ENCODE measurements at regions of chr20 and their contacts with region 1.

Region 1: GRCh38 chr20:63537525-63538203 is 488 bp upstream of the PTK6 start:
- DNase-seq: peak; percentile 93
- ATAC-seq: peak; percentile 86
- H3K4me3 Mint-ChIP-seq: peak overlapping the region; percentile 80
- H3K27ac Mint-ChIP-seq: peak overlapping the region; percentile 80
- H3K4me1 Mint-ChIP-seq: peaks cover 27% of the 10 kb centered on the region
- H3K27me3 Mint-ChIP-seq: no peaks in the 10 kb centered on the region
- CTCF ChIP-seq: peak; percentile 23

Region 2: GRCh38 chr20:63553227-63553932 is 15.7 kb after region 1 on chr20:
- CTCF ChIA-PET with region 1: interaction called, 17 read pairs
- POLR2A ChIA-PET with region 1: interaction called, 42 read pairs
- intact Hi-C with region 1: loop called (anchors 1 kb)
- DNase-seq: peak; percentile 86
- ATAC-seq: peak; percentile 78
- H3K4me3 Mint-ChIP-seq: peak overlapping the region; percentile 84
- H3K27ac Mint-ChIP-seq: peak overlapping the region; percentile 82
- H3K4me1 Mint-ChIP-seq: peaks cover 50% of the 10 kb centered on the region
- H3K27me3 Mint-ChIP-seq: no peaks in the 10 kb centered on the region
- CTCF ChIP-seq: no peak

Region 3: DNA sequence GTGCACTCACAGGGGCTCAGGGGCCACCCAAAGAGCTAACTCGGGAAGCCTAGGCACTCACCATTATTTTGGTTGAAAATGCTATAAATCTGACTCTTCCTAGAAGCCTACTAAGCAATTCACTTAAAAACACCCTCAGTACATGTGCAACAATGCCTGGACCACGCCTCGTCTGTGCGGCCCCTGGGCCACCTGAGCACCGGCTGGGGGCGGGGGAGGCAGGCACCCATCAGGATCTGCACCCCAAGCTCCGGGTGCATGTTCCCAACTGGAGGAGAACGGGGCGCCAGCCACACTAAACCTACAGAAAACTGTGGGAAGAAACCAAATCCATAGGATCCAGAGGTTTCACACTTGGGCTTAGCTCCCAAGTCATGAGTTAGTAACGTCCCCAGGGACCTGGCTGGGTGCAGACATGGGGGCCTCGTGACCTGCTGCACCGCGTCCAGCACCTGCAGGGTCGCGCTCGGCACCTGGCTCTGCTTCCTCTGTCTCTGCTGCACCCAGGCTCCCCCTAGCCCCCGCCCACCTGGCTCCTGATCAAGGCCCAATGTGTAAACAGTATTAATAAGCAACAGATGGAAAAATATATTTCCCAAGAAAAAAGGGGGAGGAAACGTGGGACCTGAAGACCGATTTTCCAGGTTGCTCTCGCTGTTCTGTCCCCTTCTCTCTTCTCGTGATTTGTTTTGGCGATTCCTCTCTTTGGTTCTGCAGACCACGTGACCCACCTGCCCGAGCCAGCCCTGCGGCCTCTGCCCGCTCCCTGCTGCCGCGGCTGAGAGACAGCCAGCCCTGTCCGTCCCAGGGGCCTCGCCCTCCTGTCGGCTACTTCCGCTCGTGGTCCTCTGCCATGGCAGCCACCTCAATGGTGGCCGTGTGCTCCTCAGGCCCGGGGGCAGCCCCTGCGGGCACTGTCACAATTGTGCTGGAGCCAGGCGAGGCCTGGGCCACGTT is 51.9 kb after region 1 on chr20:
- CTCF ChIA-PET with region 1: no interaction called
- POLR2A ChIA-PET with region 1: no interaction called
- intact Hi-C with region 1: no loop called
- DNase-seq: no peak
- ATAC-seq: no peak
- H3K4me3 Mint-ChIP-seq: no peak overlapping the region
- H3K27ac Mint-ChIP-seq: no peak overlapping the region
- H3K4me1 Mint-ChIP-seq: peaks cover 2% of the 10 kb centered on the region
- H3K27me3 Mint-ChIP-seq: no peaks in the 10 kb centered on the region
- CTCF ChIP-seq: no peak

Region 4: DNA sequence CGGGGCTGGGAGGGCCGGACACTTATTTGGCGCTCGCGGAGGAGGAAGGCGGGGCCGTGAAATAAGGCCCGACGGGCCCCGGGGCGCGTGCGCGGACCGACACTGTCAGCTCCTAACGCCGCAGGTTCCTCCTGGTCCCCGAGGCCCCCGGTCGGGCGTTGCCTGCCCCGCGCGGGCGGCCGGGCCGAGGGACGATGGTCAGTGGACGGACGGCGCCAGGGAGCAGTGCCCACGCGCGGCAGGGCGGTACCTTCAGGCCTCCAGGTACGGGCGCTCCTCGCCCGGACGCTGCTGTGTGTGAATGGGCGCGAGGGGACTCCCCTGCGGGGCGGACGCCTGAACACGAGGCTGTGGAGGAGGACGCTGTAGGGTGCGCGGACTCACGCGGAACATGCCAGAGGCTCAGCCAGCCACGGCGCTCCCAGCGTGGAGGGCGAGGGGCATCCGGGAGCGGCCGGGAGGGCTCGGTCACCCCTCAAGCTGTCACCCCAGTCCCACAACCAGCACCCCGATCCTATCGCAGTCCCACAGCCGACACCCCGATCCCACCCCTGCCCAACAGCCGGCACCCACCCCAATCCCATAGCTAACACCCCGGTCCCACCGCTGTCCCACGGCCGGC is 89.6 kb after region 1 on chr20:
- CTCF ChIA-PET with region 1: interaction called, 3 read pairs
- POLR2A ChIA-PET with region 1: interaction called, 12 read pairs
- intact Hi-C with region 1: no loop called
- DNase-seq: peak; percentile 97
- ATAC-seq: peak; percentile 77
- H3K4me3 Mint-ChIP-seq: peak overlapping the region; percentile 91
- H3K27ac Mint-ChIP-seq: peak overlapping the region; percentile 93
- H3K4me1 Mint-ChIP-seq: peaks cover 45% of the 10 kb centered on the region
- H3K27me3 Mint-ChIP-seq: no peaks in the 10 kb centered on the region
- CTCF ChIP-seq: no peak

Region 5: GRCh38 chr20:63739130-63740069 is 201.7 kb after region 1 on chr20 and contains the start of gene SLC2A4RG:
- CTCF ChIA-PET with region 1: interaction called, 3 read pairs
- POLR2A ChIA-PET with region 1: interaction called, 3 read pairs
- intact Hi-C with region 1: loop called (anchors 5 kb)
- DNase-seq: peak; percentile 73
- ATAC-seq: peak; percentile 65
- H3K4me3 Mint-ChIP-seq: peak within 1 kb of the TSS; percentile 48
- H3K27ac Mint-ChIP-seq: no peak within 1 kb of the TSS
- H3K4me1 Mint-ChIP-seq: peaks cover 28% of the 10 kb centered on the region
- H3K27me3 Mint-ChIP-seq: no peaks in the 10 kb centered on the region
- CTCF ChIP-seq: no peak
- total RNA-seq, gene SLC2A4RG: 20.9 and 28.1 TPM in 2 replicates

Region 6: DNA sequence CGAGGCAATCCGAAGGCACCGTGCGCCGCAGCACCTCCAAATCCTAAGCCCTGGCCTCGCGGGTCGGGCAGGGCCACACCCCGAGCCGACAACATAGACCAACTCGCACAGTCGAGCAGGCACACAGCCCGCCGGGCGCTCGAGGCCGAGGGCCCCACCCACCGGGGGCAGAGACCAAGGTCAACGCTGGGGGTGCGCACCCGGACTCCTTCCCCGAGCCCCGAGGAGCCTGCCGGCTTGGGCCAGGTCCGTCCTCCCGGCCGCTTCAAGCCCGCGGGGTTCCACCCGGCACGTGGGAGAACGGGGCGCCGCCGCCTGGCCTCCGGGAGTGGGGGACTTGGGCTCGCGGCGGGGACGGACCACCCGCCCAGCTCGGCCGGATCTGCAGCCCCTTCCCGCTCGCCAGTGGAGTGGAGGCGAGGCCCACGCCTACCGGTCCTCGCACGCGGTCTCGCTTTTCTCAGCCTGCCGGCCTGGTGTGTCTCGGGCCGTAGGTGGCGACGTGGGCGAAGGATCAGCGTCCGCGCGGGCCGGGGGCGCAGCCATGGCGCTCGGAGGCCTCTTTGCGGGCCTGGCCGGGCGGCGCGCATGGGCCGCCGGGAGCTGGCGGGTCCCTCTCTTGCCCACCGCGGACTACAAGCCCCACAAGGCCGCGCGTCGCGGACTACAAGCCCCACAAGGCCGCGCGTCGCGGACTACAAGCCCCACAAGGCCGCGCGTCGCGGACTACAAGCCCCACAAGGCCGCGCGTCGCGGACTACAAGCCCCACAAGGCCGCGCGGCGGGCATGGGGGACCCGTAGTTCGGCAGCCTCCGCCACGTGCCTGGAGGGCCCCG is 418.4 kb after region 1 on chr20 and contains the start of gene UCKL1:
- CTCF ChIA-PET with region 1: interaction called, 6 read pairs
- POLR2A ChIA-PET with region 1: interaction called, 12 read pairs
- intact Hi-C with region 1: loop called (anchors 1 kb)
- DNase-seq: peak; percentile 87
- ATAC-seq: peak; percentile 78
- H3K4me3 Mint-ChIP-seq: peak within 1 kb of the TSS; percentile 87
- H3K27ac Mint-ChIP-seq: peak within 1 kb of the TSS; percentile 85
- H3K4me1 Mint-ChIP-seq: peaks cover 49% of the 10 kb centered on the region
- H3K27me3 Mint-ChIP-seq: no peaks in the 10 kb centered on the region
- CTCF ChIP-seq: no peak
- total RNA-seq, gene UCKL1: 43.6 and 49.7 TPM in 2 replicates

Region 7: DNA sequence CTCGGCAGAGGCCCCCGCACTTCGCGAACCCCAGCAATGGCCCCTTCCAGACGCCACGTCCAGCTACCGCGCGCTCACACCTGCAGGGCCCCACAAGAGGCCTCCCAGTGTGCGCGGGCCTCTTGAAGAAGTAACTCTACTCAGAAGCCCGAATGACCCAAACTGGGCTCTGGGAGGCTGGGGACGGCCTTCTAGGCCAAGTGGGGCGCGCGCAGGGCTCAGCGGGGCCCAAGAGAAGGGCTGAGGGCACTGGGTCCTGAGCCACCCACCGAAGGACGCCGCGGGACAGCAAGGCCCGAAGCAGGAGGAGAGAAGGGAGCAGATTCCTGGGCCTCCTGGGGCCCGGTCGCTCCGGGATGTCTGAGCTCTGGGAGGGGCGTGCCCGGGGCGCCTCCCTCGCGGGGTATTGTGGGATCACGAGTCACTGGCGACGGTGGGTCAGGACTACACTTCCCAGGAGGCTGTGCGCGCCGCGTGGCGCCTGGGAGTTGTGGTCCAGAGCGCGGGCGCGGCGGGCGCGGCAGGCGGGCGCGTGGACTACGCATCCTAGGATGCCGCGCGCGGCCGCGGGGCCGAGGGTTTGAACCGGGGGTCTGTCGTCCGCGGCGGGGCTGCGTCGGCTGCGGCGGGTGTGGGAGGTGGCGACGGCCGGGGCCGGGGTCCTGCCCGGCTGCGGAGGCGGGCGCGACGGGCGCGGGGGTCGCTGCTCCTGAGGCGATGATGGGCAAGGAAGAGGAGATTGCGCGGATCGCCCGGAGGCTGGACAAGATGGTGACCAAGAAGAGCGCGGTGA is 525.1 kb after region 1 on chr20 and contains the start of gene TCEA2:
- CTCF ChIA-PET with region 1: no interaction called
- POLR2A ChIA-PET with region 1: no interaction called
- intact Hi-C with region 1: loop called (anchors 5 kb)
- DNase-seq: peak; percentile 94
- ATAC-seq: peak; percentile 84
- H3K4me3 Mint-ChIP-seq: peak within 1 kb of the TSS; percentile 88
- H3K27ac Mint-ChIP-seq: peak within 1 kb of the TSS; percentile 67
- H3K4me1 Mint-ChIP-seq: peaks cover 51% of the 10 kb centered on the region
- H3K27me3 Mint-ChIP-seq: no peaks in the 10 kb centered on the region
- CTCF ChIP-seq: no peak
- total RNA-seq, gene TCEA2: 20.3 and 20.7 TPM in 2 replicates